ENCODE measurements at regions of chr3 and their contacts with region 1.

Region 1: DNA sequence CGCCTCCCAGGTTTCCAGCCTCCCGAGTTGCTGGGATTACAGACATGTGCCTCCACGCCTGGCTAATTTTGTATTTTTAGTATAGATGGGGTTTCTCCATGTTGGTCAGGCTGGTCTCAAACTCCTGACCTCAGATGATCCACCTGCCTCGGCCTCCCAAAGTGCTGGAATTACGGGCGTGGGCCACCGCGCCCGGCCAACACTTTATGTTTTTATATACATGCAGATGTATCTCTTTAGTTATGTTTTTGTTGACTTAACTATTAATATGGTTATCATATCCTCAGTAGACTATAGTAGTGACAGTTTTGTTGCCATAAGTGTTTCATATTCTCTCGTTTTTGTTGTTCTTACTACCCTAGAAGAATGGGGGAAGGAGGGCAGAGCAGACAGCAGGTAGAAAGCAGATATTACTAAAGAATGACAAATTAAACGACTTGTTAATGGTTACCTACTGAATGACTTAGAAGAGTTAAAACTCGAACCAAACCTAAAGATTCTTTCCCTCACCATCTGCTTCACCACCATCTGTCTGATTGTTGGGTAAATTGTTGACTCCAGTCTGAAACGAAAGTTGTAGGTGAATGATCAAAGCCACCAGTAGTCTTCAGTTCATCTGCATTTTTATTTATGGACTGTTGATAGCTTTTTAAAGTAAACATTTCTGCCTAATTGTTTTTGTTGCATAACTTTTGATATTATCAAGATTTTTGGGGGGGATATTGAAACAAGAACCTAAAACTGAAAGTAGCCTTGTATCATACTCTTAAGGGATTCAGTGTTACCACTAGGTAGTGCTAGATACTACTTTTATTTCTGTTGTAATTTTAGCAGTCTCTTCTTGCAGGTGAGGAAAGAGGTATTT is 89.3 kb downstream of the RASA2 start:
- DNase-seq: no peak
- ATAC-seq: peak in 2 of 4 donors; percentile 47 to 53
- H3K4me3 ChIP-seq: no peak overlapping the region
- H3K27ac ChIP-seq: no peak overlapping the region
- H3K4me1 ChIP-seq: no peaks in the 10 kb centered on the region
- H3K27me3 ChIP-seq: no peaks in the 10 kb centered on the region
- CTCF ChIP-seq: peak; percentile 50

Region 2: DNA sequence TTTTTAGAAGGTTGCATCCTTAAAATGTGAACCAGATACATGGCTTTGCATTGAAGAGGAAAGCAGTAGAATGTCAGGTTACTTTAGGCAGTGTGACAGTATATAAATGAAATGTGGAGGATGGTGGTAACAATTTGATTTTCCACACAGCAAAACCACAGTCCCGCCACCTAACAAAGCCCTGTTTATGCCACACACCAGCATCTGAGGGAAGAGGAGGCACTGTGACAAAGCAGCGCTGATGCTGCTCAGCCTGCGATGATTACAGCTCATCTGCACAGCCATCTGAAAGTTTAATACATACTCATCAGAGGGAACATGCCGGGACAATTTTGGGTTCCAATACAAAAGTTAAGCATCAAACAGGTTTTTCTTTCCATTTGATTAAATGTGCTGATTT is 170.9 kb after region 1 on chr3:
- intact Hi-C with region 1: no loop called
- DNase-seq: no peak
- ATAC-seq: no peak
- H3K4me3 ChIP-seq: no peak overlapping the region
- H3K27ac ChIP-seq: no peak overlapping the region
- H3K4me1 ChIP-seq: peaks cover 26% of the 10 kb centered on the region
- H3K27me3 ChIP-seq: no peaks in the 10 kb centered on the region
- CTCF ChIP-seq: no peak

Region 3: DNA sequence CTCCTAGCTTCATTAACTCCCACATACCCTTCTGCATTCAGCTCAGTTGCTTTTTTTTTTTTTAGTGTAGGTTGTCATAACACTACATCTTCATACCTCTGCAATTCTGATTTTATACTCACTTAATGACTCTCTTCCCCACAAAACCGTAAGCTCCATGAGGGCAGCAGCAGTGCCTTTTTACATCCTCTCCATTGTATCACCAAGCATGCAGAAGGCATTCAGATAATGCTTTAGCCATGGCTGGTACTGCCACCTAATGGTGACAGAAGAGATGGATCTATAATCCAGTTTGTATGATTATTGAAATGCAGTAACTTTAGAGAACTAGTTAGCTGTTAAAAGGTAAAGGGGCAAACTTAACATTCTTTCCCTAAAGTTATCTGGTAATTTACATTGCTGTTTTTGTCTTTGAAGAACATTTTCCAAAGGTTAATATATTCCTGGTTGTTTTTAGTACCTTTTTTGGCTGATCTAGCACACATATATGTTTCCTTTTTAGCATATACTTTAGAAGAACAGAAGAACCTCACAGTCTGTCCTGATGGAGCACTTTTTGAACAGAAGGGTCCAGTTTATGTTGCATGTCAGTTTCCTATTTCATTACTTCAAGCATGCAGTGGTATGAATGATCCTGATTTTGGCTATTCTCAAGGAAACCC is 337.2 kb after region 1 on chr3:
- intact Hi-C with region 1: loop called in 1 of 2 experiments (anchors 5 kb)
- DNase-seq: no peak
- ATAC-seq: peak; percentile 46 to 80 (median 70)
- H3K4me3 ChIP-seq: no peak overlapping the region
- H3K27ac ChIP-seq: no peak overlapping the region
- H3K4me1 ChIP-seq: no peaks in the 10 kb centered on the region
- H3K27me3 ChIP-seq: no peaks in the 10 kb centered on the region
- CTCF ChIP-seq: peak; percentile 66

Measured in psoas muscle (tissue), 8 donors.